CD8-positive, alpha-beta memory T cell (primary cell): ENCODE measurements at regions of chr5 and their contacts with region 1.

Region 1: DNA sequence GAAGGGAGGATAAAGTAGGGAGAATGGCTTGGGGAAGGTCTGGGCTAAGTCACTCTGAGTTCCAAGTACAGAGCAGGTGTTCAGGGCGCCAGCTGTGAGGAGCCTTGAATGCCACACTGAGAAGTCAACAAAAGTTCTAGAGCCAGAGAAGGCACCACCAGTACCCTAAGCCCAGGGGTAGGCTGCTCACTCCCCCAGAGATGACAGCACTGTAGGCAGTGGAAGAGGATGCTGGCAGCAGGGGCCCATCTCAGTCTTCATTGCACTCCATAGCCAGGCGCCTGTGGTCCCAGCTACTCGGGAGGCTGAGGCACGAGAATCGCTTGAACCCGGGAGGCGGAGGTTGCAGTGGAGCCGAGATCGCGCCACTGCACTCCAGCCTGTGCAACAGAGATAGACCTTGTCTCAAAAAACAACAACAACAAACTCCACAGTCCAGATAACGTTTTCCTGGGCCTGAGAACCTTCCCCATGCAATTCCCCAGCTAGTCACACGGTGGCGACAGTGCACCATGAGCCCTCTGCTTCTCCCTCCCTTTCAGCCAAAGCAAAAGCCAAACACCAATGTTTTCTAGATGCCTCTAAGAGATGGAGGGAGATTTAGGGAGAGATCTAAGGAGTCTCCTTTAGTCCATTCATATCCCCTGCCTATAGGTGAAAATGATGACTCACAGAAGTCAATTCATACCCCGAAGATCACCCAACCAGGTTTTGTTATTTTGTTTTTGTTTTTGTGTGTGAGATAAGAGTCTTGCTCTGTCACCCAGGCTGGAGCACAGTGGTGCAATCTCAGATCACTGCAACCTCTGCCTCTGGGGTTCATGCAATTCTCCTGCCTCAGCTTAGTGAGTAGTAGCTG is 19.8 kb upstream of the NSD1 start:
- DNase-seq: peak; percentile 65 to 82 (median 70)
- H3K4me3 ChIP-seq: no peak overlapping the region
- H3K4me3 Mint-ChIP-seq: no peak overlapping the region
- H3K27ac ChIP-seq: no peak overlapping the region
- H3K27ac Mint-ChIP-seq: peak overlapping the region in 1 of 8 donors; percentile 1
- H3K4me1 ChIP-seq: peaks cover 16% of the 10 kb centered on the region
- H3K4me1 Mint-ChIP-seq: peaks cover 19 to 24% (median 24%) of the 10 kb centered on the region in 3 donors
- H3K27me3 ChIP-seq: no peaks in the 10 kb centered on the region
- H3K27me3 Mint-ChIP-seq: no peaks in the 10 kb centered on the region

Region 2: DNA sequence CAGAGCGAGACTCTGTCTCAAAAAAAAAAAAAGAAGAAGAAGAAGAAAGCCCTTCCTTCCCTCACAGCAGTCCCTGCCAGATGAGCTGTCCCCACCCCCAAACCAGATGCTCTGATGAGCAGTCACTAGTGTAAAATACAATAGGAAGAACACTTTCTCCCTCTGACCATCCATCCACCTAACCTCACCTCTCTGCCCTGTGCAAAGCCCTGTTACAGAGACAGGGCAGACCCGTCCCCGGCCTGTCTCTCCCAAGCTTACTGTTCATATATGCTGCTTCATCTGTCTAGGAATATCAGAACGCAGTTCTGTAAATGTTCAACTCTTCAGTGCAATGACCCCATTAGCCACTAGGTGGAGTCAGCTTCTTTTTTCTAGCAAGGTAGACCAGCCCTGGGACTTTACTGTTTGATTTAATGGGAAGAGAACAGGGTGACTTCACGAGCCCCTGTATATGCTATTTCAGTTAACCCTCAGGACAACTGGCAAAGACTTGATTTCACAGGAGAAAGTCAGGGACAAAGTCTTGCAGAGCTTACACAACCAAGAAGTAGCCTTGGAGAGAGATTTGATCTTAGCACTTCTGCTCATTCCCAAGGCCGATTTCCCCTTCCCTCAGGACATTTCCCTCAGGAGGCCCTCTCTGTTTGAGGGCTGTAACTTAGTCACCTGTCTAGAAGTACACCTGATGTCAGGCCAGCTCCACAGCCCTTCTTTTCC is 42.0 kb before region 1 on chr5:
- CTCF ChIA-PET with region 1: interaction called, 31 read pairs
- POLR2A ChIA-PET with region 1: no interaction called
- DNase-seq: peak; percentile 31 to 60 (median 52)
- H3K4me3 ChIP-seq: no peak overlapping the region
- H3K4me3 Mint-ChIP-seq: peak overlapping the region in 1 of 7 donors; percentile 11
- H3K27ac ChIP-seq: no peak overlapping the region
- H3K27ac Mint-ChIP-seq: peak overlapping the region in 1 of 8 donors; percentile 62
- H3K4me1 ChIP-seq: no peaks in the 10 kb centered on the region
- H3K4me1 Mint-ChIP-seq: peaks cover 3 to 5% (median 5%) of the 10 kb centered on the region in 3 donors
- H3K27me3 ChIP-seq: no peaks in the 10 kb centered on the region
- H3K27me3 Mint-ChIP-seq: no peaks in the 10 kb centered on the region

Region 3: GRCh38 chr5:177133091-177133852 is 19.5 kb after region 1 on chr5 and contains the start of gene NSD1:
- CTCF ChIA-PET with region 1: interaction called, 30 read pairs
- POLR2A ChIA-PET with region 1: interaction called, 16 read pairs
- DNase-seq: peak; percentile 83 to 94 (median 89)
- H3K4me3 ChIP-seq: peak within 1 kb of the TSS; percentile 65
- H3K4me3 Mint-ChIP-seq: peak within 1 kb of the TSS; percentile 82 to 93 (median 88)
- H3K27ac ChIP-seq: peak within 1 kb of the TSS; percentile 74
- H3K27ac Mint-ChIP-seq: peak within 1 kb of the TSS; percentile 59 to 97 (median 90)
- H3K4me1 ChIP-seq: peaks cover 64% of the 10 kb centered on the region
- H3K4me1 Mint-ChIP-seq: peaks cover 52 to 61% (median 55%) of the 10 kb centered on the region in 3 donors
- H3K27me3 ChIP-seq: no peaks in the 10 kb centered on the region
- H3K27me3 Mint-ChIP-seq: no peaks in the 10 kb centered on the region
- total RNA-seq, gene NSD1: 86.7 to 93.1 TPM

Region 4: DNA sequence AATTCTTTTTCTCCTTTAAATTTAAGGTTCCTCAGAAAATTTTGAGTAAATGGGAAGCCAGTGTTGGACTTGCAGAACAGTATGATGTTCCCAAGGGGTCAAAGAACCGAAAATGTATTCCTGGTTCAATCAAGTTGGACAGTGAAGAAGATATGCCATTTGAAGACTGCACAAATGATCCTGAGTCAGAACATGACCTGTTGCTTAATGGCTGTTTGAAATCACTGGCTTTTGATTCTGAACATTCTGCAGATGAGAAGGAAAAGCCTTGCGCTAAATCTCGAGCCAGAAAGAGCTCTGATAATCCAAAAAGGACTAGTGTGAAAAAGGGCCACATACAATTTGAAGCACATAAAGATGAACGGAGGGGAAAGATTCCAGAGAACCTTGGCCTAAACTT is 95.8 kb after region 1 on chr5:
- CTCF ChIA-PET with region 1: interaction called, 14 read pairs
- POLR2A ChIA-PET with region 1: no interaction called
- DNase-seq: no peak
- H3K4me3 ChIP-seq: no peak overlapping the region
- H3K4me3 Mint-ChIP-seq: no peak overlapping the region
- H3K27ac ChIP-seq: no peak overlapping the region
- H3K27ac Mint-ChIP-seq: peak overlapping the region in 1 of 8 donors; percentile 87
- H3K4me1 ChIP-seq: no peaks in the 10 kb centered on the region
- H3K4me1 Mint-ChIP-seq: peaks cover 2 to 12% (median 3%) of the 10 kb centered on the region in 3 donors
- H3K27me3 ChIP-seq: no peaks in the 10 kb centered on the region
- H3K27me3 Mint-ChIP-seq: no peaks in the 10 kb centered on the region